ENCODE measurements at regions of chr9 and their contacts with region 1.

Region 1: GRCh38 chr9:34500623-34501267 is 22.0 kb downstream of the ENHO start:
- DNase-seq: peak; percentile 49 to 84
- ATAC-seq: peak; percentile 73
- H3K4me3 ChIP-seq: no peak overlapping the region
- H3K27ac ChIP-seq: no peak overlapping the region
- H3K4me1 ChIP-seq: no peaks in the 10 kb centered on the region
- H3K27me3 ChIP-seq: no peaks in the 10 kb centered on the region

Region 2: DNA sequence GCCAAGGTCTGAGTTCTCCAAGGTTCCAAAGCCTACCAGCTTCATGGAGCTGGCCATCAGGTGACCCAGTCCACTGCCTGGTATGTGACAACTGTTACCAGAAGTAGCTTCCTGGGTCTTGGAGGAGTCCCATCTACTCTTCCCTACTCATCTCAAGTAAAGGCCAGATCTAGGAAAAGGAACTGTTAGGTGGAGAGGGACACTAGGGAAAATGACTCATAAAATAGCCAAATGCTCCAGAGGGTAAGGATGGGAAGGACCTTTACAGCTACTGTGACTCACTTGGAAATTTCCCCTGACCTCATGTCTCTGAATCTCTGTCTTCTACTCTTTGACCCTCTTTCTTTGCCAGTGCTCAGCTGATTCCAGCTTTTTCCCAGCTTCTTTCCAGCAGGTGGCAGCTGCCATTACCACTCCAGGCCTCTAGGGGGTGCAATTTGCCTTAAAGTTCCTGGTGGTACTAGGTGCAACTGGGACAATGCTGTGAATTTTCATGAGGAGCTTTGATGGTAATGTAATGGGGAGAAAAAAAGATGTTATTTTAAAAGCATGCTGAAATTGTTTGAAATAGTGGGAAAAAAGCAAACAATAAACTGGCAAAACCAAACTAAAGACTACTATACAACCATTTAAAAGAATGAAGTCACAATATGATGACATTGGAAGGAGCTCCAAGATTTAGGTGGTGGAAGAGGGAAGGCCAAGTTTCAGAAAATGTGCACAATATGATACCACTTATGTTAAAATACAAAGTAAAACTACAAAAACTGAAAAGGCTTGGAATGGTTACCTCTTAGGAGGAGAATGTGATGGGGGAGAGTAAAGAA is 97.0 kb before region 1 on chr9:
- intact Hi-C with region 1: loop called (anchors 1 to 5 kb)
- DNase-seq: peak; percentile 65 to 88
- ATAC-seq: peak; percentile 79
- H3K4me3 ChIP-seq: no peak overlapping the region
- H3K27ac ChIP-seq: no peak overlapping the region
- H3K4me1 ChIP-seq: no peaks in the 10 kb centered on the region
- H3K27me3 ChIP-seq: no peaks in the 10 kb centered on the region

Region 3: GRCh38 chr9:34437006-34437925 is 63.5 kb before region 1 on chr9:
- intact Hi-C with region 1: loop called (anchors 2 to 5 kb)
- DNase-seq: no peak
- ATAC-seq: no peak
- H3K4me3 ChIP-seq: no peak overlapping the region
- H3K27ac ChIP-seq: no peak overlapping the region
- H3K4me1 ChIP-seq: no peaks in the 10 kb centered on the region
- H3K27me3 ChIP-seq: no peaks in the 10 kb centered on the region

Region 4: GRCh38 chr9:34458013-34458958 is 42.5 kb before region 1 on chr9 and contains the starts of genes DNAI1 and FAM219A:
- intact Hi-C with region 1: loop called in 1 of 2 experiments (anchors 5 kb)
- DNase-seq: peak; percentile 99
- ATAC-seq: peak; percentile 98
- H3K4me3 ChIP-seq: peak within 1 kb of the TSS; percentile 88
- H3K27ac ChIP-seq: peak within 1 kb of the TSS in 1 of 2 donors; percentile 32
- H3K4me1 ChIP-seq: no peaks in the 10 kb centered on the region
- H3K27me3 ChIP-seq: no peaks in the 10 kb centered on the region
- total RNA-seq, gene DNAI1: not detected
- total RNA-seq, gene FAM219A: 43.9 to 48.0 TPM

Region 5: GRCh38 chr9:34554211-34555001 is 53.7 kb after region 1 on chr9:
- intact Hi-C with region 1: no loop called
- DNase-seq: peak; percentile 33 to 40
- ATAC-seq: no peak
- H3K4me3 ChIP-seq: no peak overlapping the region
- H3K27ac ChIP-seq: no peak overlapping the region
- H3K4me1 ChIP-seq: no peaks in the 10 kb centered on the region
- H3K27me3 ChIP-seq: no peaks in the 10 kb centered on the region

Region 6: DNA sequence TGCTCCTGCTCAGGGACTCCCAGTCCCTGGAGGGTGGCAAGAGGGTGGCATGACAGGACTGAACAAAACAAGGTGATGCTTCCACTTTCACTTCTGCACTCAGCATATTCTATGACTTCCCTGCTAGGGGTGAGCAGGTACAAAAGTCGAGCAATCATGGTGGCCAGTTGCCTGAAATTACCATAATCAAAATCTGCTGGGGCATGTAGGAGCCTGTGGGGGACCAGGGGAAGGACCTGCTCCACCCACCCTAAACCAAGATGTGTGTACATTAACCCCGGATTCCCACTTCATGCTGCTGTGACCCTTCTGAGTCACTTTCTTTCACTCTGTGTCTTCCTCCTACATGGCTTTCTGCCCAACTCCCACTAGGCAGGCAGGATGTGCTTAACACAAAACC is 384.0 kb after region 1 on chr9:
- intact Hi-C with region 1: no loop called
- DNase-seq: no peak
- ATAC-seq: no peak
- H3K4me3 ChIP-seq: no peak overlapping the region
- H3K27ac ChIP-seq: no peak overlapping the region
- H3K4me1 ChIP-seq: no peaks in the 10 kb centered on the region
- H3K27me3 ChIP-seq: no peaks in the 10 kb centered on the region

Measured in aorta (tissue), 5 donors.